ENCODE measurements at regions of chr16 and their contacts with region 1.

Region 1: DNA sequence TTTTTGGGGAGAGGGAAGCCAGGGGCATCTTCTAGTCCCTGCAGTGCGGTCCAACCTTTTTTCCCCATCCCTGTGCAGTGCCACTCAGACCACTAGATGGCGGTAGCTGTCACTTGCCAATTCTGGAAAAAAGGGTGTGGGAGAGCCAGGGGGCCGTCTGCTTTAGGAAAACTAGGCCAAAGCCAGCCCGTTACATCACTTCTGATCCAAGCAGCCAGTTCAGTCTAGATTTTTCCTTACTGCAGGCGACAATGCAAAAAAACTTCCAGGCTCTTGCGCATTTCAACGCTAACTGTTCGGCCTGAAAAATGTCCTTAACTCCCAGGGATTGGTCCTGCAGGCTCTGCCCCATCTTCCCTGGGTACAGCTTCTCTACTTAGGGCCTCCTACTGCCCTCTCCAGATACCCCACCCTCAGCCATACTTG is 69.2 kb upstream of the CES5A start:
- DNase-seq: peak; percentile 47 to 68
- H3K4me3 ChIP-seq: no peak overlapping the region
- H3K27ac ChIP-seq: no peak overlapping the region
- H3K4me1 ChIP-seq: no peaks in the 10 kb centered on the region
- H3K27me3 ChIP-seq: no peaks in the 10 kb centered on the region
- CTCF ChIP-seq: peak; percentile 66 to 88 (median 74)
- POLR2A ChIP-seq: no peak

Region 2: GRCh38 chr16:56324406-56324805 is 380.0 kb after region 1 on chr16:
- intact Hi-C with region 1: loop called (anchors 10 kb)
- DNase-seq: no peak
- H3K4me3 ChIP-seq: no peak overlapping the region
- H3K27ac ChIP-seq: no peak overlapping the region
- H3K4me1 ChIP-seq: no peaks in the 10 kb centered on the region
- H3K27me3 ChIP-seq: no peaks in the 10 kb centered on the region
- CTCF ChIP-seq: no peak
- POLR2A ChIP-seq: no peak

Measured in uterus (tissue), 4 donors.